ENCODE measurements at regions of chr14 and their contacts with region 1.

Region 1: GRCh38 chr14:73924337-73924736 is 25.6 kb downstream of the FAM161B start:
- DNase-seq: no peak
- ATAC-seq: no peak
- H3K4me3 ChIP-seq: no peak overlapping the region
- H3K27ac ChIP-seq: no peak overlapping the region
- H3K4me1 ChIP-seq: no peaks in the 10 kb centered on the region
- H3K27me3 ChIP-seq: no peaks in the 10 kb centered on the region
- CTCF ChIP-seq: no peak

Region 2: GRCh38 chr14:73949744-73950734 is 25.7 kb after region 1 on chr14 and contains the starts of genes COQ6 and FAM161B:
- CTCF ChIA-PET with region 1: no interaction called
- POLR2A ChIA-PET with region 1: interaction called, 13 read pairs
- intact Hi-C with region 1: no loop called
- DNase-seq: peak; percentile 99
- ATAC-seq: peak; percentile 97
- H3K4me3 ChIP-seq: peak within 1 kb of the TSS; percentile 91
- H3K27ac ChIP-seq: peak within 1 kb of the TSS; percentile 70
- H3K4me1 ChIP-seq: no peaks in the 10 kb centered on the region
- H3K27me3 ChIP-seq: no peaks in the 10 kb centered on the region
- CTCF ChIP-seq: no peak
- total RNA-seq, gene COQ6: 33.2 and 40.3 TPM in 2 replicates
- total RNA-seq, gene FAM161B: 2.8 and 3.5 TPM in 2 replicates